ENCODE measurements at regions of chr2 and their contacts with region 1.

Region 1: GRCh38 chr2:235116885-235117492 is 165.2 kb downstream of the SH3BP4 start:
- DNase-seq: no peak
- ATAC-seq: no peak

Region 2: DNA sequence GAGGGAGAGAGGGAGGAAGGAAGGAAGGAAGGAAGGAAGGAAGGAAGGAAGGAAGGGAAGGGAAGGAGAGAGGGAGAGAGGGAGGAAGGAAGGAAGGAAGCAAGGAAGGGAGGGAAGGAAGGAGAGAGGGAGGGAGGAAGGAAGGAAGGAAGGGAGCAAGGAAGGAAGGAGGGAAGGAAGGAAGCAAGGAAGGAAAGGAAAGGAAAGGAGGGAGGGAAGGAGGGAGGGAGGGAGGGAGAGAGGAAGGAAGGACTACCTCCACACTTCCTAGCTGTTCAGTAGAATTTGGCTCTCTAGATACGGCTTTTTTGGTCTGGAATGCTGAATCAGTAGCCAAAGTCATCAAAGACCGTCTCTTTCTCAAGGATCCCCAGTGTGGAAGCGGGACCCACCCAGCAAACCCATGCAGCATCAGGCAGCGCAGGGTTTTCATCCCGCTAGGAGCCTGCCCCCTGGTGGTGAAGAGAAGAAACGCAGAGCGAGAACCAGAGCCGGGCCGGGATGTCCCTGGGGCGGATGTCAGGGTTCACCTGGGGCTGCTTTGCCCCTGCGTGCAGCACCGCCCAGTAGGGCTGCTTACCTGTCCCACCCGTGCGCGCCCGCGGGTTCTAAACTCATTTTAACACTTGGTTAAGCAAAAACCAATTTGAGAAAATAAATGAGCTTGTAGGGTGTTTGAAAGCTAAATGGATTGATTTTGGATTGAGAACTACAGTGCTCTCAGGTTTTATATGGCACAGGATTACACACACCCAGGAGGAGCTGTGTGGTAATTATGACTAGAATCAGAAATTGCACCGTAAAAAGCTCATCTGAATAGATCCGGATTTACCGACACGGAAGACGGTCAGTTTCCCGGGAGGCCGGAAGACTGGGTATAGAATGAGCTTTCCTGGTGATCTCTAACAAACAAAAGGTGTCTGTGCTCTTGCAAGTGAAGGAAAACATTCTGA is 572.1 kb before region 1 on chr2:
- intact Hi-C with region 1: loop called (anchors 2 to 5 kb)
- DNase-seq: peak; percentile 62
- ATAC-seq: peak in 1 of 2 donors; percentile 70

Region 3: GRCh38 chr2:234550511-234551107 is 566.4 kb before region 1 on chr2:
- intact Hi-C with region 1: loop called (anchors 2 to 5 kb)
- DNase-seq: peak; percentile 53
- ATAC-seq: peak; percentile 80 to 83

Region 4: GRCh38 chr2:234951664-234952269 is 165.2 kb before region 1 on chr2 and contains the start of gene SH3BP4:
- intact Hi-C with region 1: no loop called
- DNase-seq: peak; percentile 87
- ATAC-seq: peak; percentile 93 to 94
- total RNA-seq, gene SH3BP4: 15.1 to 27.0 TPM

Region 5: GRCh38 chr2:235157746-235158482 is 40.9 kb after region 1 on chr2:
- intact Hi-C with region 1: no loop called
- DNase-seq: no peak
- ATAC-seq: no peak

Region 6: DNA sequence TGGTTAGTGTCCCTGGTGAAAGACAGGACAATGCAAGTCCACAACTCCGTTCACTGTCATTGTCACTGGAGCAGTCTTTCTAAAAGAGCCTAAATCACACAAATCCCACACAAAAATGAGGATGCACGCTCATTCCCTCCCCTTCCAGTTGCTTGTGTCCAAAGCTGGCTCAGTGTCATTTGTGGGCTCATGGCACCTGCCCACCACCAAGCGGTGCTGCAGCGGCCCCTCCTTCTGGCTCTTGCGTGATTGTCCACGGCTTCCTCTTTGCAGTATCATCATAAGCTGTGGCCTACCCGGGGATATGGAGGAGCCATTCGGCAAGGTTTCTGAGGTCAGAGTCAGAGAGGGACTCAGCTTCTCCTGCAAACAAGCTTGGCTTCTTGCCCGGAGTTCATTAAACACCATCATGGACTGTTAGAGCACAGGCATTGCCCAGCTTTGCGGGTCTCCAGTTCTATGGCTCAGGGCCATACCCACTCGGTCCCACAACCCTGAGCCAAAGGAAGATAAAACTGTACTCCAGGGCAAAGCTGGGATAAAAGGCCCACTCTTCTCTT is 197.5 kb after region 1 on chr2:
- intact Hi-C with region 1: no loop called
- DNase-seq: no peak
- ATAC-seq: no peak